Caco-2 (cell line): ENCODE measurements at regions of chr3 and their contacts with region 1.

Region 1: GRCh38 chr3:80618295-80619256 is 850.8 kb upstream of the ROBO1 start:
- DNase-seq: peak in 1 of 2 experiments; percentile 21
- H3K4me3 ChIP-seq: no peak overlapping the region
- H3K4me3 Mint-ChIP-seq: no peak overlapping the region
- H3K27ac Mint-ChIP-seq: no peak overlapping the region
- H3K4me1 ChIP-seq: peaks cover 16% of the 10 kb centered on the region
- H3K4me1 Mint-ChIP-seq: peaks cover 6% of the 10 kb centered on the region
- H3K27me3 ChIP-seq: no peaks in the 10 kb centered on the region
- H3K27me3 Mint-ChIP-seq: no peaks in the 10 kb centered on the region
- CTCF ChIP-seq: no peak

Region 2: GRCh38 chr3:80556763-80557162 is 61.8 kb before region 1 on chr3:
- CTCF ChIA-PET with region 1: no interaction called
- POLR2A ChIA-PET with region 1: no interaction called
- intact Hi-C with region 1: loop called (anchors 1 kb)
- DNase-seq: peak; percentile 32 to 38
- H3K4me3 ChIP-seq: no peak overlapping the region
- H3K4me3 Mint-ChIP-seq: no peak overlapping the region
- H3K27ac Mint-ChIP-seq: no peak overlapping the region
- H3K4me1 ChIP-seq: no peaks in the 10 kb centered on the region
- H3K4me1 Mint-ChIP-seq: peaks cover 11% of the 10 kb centered on the region
- H3K27me3 ChIP-seq: no peaks in the 10 kb centered on the region
- H3K27me3 Mint-ChIP-seq: no peaks in the 10 kb centered on the region
- CTCF ChIP-seq: no peak